H1 (cell line): ENCODE measurements at regions of chr13 and their contacts with region 1.

Region 1: DNA sequence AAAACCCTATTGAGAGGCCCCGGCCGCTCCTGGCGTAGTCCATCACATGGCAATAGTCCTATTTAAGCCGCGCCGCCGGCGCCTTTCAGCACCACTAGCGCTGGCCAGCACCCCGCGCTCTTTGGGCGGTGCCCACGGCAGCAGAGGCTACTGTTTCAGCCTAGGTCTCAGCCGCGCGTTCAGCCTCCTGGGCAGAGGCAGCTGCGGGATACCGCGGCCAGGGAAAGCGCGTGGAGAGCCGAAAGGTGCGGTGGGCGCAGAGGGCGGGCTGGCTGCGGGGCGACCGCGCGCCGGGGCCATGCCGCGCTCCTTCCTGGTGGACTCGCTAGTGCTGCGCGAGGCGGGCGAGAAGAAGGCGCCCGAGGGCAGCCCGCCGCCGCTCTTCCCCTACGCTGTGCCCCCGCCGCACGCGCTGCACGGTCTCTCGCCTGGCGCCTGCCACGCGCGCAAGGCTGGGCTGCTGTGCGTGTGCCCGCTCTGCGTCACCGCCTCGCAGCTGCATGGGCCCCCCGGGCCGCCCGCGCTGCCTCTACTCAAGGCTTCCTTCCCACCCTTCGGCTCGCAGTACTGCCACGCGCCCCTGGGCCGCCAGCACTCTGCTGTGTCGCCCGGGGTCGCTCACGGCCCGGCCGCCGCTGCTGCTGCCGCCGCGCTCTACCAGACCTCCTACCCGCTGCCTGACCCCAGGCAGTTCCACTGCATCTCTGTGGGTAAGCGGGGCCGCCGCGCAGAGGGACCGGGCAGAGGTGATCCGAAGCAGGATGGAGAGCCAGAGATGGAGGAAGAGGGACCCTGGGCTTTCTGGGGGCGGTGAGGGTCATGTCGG is at the start of gene GSX1:
- DNase-seq: peak; percentile 63 to 87
- H3K4me3 ChIP-seq: peak within 1 kb of the TSS in 1 of 4 experiments; percentile 54; a peak in 3 of 8 replicates
- H3K27ac ChIP-seq: no peak within 1 kb of the TSS
- H3K4me1 ChIP-seq: peaks cover 10 to 55% (median 35%) of the 10 kb centered on the region in 4 experiments
- H3K27me3 ChIP-seq: peaks cover 95 to 100% (median 100%) of the 10 kb centered on the region in 4 experiments
- CTCF ChIP-seq: no peak
- EP300 ChIP-seq: no peak
- POLR2A ChIP-seq: no peak
- RAD21 ChIP-seq: peak in 1 of 2 experiments; percentile 4; a peak in 1 of 4 replicates
- total RNA-seq, gene GSX1: not detected in 2 replicates

Region 2: DNA sequence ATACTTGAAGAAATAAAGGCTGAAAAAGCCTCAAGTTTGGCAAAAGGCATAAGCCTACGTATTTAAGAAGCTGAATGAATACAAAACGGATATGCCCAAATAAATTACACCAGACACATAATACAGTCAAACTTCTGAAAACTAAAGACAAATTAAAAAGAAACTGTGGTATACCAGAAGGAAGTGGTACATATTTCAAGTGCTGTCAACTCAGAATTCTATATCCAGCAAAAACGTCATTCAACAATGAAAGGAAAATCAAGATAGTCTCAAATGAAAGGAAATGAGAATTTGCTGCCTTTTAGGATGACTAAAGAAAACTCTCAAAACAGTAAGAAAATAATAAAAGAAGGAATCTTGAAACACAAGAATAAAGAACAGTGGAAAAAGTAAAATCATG is 101.4 kb before region 1 on chr13:
- CTCF ChIA-PET with region 1: no interaction called
- POLR2A ChIA-PET with region 1: no interaction called
- DNase-seq: no peak
- H3K4me3 ChIP-seq: no peak overlapping the region
- H3K27ac ChIP-seq: no peak overlapping the region
- H3K4me1 ChIP-seq: no peaks in the 10 kb centered on the region
- H3K27me3 ChIP-seq: no peaks in the 10 kb centered on the region
- CTCF ChIP-seq: no peak
- EP300 ChIP-seq: no peak
- POLR2A ChIP-seq: no peak
- RAD21 ChIP-seq: no peak

Region 3: GRCh38 chr13:27770809-27771208 is 21.8 kb before region 1 on chr13:
- CTCF ChIA-PET with region 1: interaction called, 98 read pairs
- POLR2A ChIA-PET with region 1: no interaction called
- DNase-seq: no peak
- H3K4me3 ChIP-seq: no peak overlapping the region
- H3K27ac ChIP-seq: no peak overlapping the region
- H3K4me1 ChIP-seq: no peaks in the 10 kb centered on the region
- H3K27me3 ChIP-seq: peaks cover 0 to 3% (median 0%) of the 10 kb centered on the region in 4 experiments; a peak in 3 of 7 replicates
- CTCF ChIP-seq: peak; percentile 35 to 89 (median 84)
- EP300 ChIP-seq: no peak
- POLR2A ChIP-seq: no peak
- RAD21 ChIP-seq: peak; percentile 79 to 83

Region 4: GRCh38 chr13:27808851-27809550 is 16.4 kb after region 1 on chr13:
- CTCF ChIA-PET with region 1: interaction called, 28 read pairs
- POLR2A ChIA-PET with region 1: interaction called, 3 read pairs
- DNase-seq: no peak
- H3K4me3 ChIP-seq: no peak overlapping the region
- H3K27ac ChIP-seq: no peak overlapping the region
- H3K4me1 ChIP-seq: peaks cover 5 to 14% (median 10%) of the 10 kb centered on the region in 4 experiments
- H3K27me3 ChIP-seq: peaks cover 0 to 33% (median 11%) of the 10 kb centered on the region in 4 experiments; a peak in 4 of 7 replicates
- CTCF ChIP-seq: no peak
- EP300 ChIP-seq: no peak
- POLR2A ChIP-seq: no peak
- RAD21 ChIP-seq: no peak

Region 5: DNA sequence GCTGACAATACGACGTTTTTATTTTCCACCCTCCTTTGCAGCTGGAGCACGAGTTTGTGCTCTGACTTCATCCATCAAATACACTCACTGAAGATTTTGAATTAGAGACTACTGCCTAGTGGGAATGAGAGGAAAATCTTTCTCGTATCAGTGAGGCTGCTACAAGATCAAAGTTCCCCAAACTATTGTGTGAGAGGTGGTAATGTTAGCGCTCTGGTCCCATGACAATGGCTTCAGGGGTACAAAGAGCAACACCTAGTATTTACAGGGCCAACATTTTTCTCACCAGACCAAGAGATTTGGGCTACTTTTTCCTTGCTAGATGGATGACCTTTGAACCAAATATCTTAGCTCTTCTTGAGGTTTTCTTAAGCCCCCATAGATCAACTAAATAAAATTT is 96.9 kb after region 1 on chr13:
- CTCF ChIA-PET with region 1: no interaction called
- POLR2A ChIA-PET with region 1: no interaction called
- DNase-seq: no peak
- H3K4me3 ChIP-seq: no peak overlapping the region
- H3K27ac ChIP-seq: no peak overlapping the region
- H3K4me1 ChIP-seq: no peaks in the 10 kb centered on the region
- H3K27me3 ChIP-seq: no peaks in the 10 kb centered on the region
- CTCF ChIP-seq: no peak
- EP300 ChIP-seq: no peak
- POLR2A ChIP-seq: no peak
- RAD21 ChIP-seq: no peak

Region 6: GRCh38 chr13:27960362-27961226 is 168.0 kb after region 1 on chr13:
- CTCF ChIA-PET with region 1: interaction called, 11 read pairs
- POLR2A ChIA-PET with region 1: no interaction called
- DNase-seq: peak in 1 of 2 experiments; percentile 95
- H3K4me3 ChIP-seq: peak overlapping the region in 3 of 4 experiments; percentile 11 to 49 (median 26); a peak in 4 of 8 replicates
- H3K27ac ChIP-seq: no peak overlapping the region
- H3K4me1 ChIP-seq: peaks cover 7 to 20% (median 12%) of the 10 kb centered on the region in 4 experiments; a peak in 6 of 7 replicates
- H3K27me3 ChIP-seq: peaks cover 90 to 100% (median 98%) of the 10 kb centered on the region in 4 experiments
- CTCF ChIP-seq: peak in 2 of 3 experiments; percentile 81 to 83; a peak in 3 of 4 replicates
- EP300 ChIP-seq: no peak
- POLR2A ChIP-seq: no peak
- RAD21 ChIP-seq: peak; percentile 74 to 85